CD8-positive, alpha-beta T cell (primary cell): ENCODE measurements at regions of chr19 and their contacts with region 1.

Region 1: DNA sequence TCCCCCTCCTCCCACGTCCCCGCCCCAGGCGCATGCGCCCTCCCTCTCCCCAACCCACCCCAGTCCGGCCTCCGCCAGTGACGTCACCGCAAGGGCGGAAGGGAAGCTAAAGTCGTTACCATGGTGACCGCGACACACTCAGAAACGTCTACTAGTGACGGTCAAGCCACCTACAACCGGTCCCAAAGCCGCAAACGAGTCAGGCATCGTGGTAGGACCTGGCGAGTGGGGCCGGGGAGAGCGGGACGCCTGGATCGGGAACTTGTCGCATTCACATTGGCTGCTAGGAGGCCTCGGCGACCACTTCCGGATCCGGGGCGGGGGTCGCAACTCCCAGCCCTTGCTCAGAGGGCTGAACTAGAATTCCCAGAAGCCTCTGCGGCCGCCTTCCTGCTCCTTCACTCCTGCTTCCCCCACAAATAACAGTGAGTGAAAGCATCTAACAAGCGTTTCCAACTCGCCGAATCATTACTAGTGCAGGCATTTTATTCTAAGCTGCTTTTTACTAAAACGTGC is at the start of gene ZSCAN5A:
- DNase-seq: peak; percentile 93 to 99 (median 98)
- ATAC-seq: peak; percentile 73
- H3K4me3 ChIP-seq: peak within 1 kb of the TSS; percentile 87 to 88
- H3K4me3 Mint-ChIP-seq: peak within 1 kb of the TSS; percentile 95
- H3K27ac ChIP-seq: peak within 1 kb of the TSS; percentile 96 to 100
- H3K27ac Mint-ChIP-seq: peak within 1 kb of the TSS; percentile 99
- H3K4me1 ChIP-seq: peaks cover 21% of the 10 kb centered on the region
- H3K4me1 Mint-ChIP-seq: peaks cover 26% of the 10 kb centered on the region
- H3K27me3 ChIP-seq: no peaks in the 10 kb centered on the region
- H3K27me3 Mint-ChIP-seq: no peaks in the 10 kb centered on the region
- CTCF ChIP-seq: no peak
- total RNA-seq, gene ZSCAN5A: 4.6 to 7.0 TPM

Region 2: DNA sequence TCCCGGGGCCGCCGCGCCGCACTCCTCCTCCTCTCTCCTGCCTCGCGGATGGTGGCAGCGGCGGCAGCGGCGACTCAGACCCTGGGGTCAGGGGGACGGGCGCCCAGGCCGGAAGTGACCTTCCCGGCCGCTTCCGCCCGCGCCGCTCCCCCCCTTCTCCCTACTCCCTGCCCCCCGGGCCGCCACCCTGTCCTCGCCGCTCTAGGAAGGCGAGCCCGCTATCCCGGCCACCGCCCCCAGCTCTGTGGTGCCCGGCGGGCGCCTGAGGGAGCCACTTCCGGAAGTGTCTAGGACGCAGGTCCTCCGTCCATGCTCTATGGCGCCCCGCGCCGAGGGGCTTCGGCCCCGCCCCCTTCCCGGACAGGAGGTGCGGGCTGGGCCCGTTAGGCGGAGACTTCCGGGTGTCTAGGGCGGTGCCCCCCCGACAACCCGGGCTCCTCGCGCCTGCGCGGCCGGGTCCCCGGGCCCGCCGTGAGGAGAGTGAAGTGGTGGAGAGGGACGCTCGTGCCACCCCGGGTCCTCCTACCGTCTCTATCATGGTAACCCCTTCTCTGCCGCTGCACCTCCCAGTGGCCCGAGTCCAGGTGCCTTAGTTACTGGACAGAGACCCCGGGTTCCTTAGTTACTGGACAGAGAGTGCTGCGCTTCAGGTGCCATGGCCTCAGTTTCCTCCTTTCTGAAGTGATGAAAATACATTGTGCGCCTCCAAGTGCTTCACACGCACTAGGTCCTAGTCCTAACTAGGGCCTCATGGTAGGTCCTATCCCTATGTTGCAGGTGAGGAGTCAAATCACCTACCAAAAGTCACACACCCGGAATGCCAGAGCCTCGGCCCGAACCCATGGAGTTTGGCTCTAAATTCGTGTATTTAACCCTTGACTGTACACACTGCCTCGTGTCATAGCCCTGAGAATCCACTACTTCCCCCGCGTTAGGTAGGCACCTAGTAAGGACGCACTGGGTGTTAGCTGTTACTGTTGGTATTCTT is 193.1 kb before region 1 on chr19 and contains the start of gene ZNF787:
- CTCF ChIA-PET with region 1: no interaction called
- POLR2A ChIA-PET with region 1: interaction called, 3 read pairs
- intact Hi-C with region 1: loop called (anchors 1 kb)
- DNase-seq: peak; percentile 94 to 99 (median 97)
- ATAC-seq: peak; percentile 82
- H3K4me3 ChIP-seq: peak within 1 kb of the TSS; percentile 56 to 67
- H3K4me3 Mint-ChIP-seq: peak within 1 kb of the TSS; percentile 88
- H3K27ac ChIP-seq: peak within 1 kb of the TSS; percentile 81 to 97
- H3K27ac Mint-ChIP-seq: peak within 1 kb of the TSS; percentile 94
- H3K4me1 ChIP-seq: peaks cover 24% of the 10 kb centered on the region
- H3K4me1 Mint-ChIP-seq: peaks cover 43% of the 10 kb centered on the region
- H3K27me3 ChIP-seq: no peaks in the 10 kb centered on the region
- H3K27me3 Mint-ChIP-seq: no peaks in the 10 kb centered on the region
- CTCF ChIP-seq: no peak
- total RNA-seq, gene ZNF787: 10.2 to 10.8 TPM

Region 3: GRCh38 chr19:56273563-56274117 is 41.0 kb before region 1 on chr19:
- CTCF ChIA-PET with region 1: no interaction called
- POLR2A ChIA-PET with region 1: no interaction called
- intact Hi-C with region 1: no loop called
- DNase-seq: no peak
- ATAC-seq: no peak
- H3K4me3 ChIP-seq: no peak overlapping the region
- H3K4me3 Mint-ChIP-seq: no peak overlapping the region
- H3K27ac ChIP-seq: no peak overlapping the region
- H3K27ac Mint-ChIP-seq: no peak overlapping the region
- H3K4me1 ChIP-seq: no peaks in the 10 kb centered on the region
- H3K4me1 Mint-ChIP-seq: no peaks in the 10 kb centered on the region
- H3K27me3 ChIP-seq: no peaks in the 10 kb centered on the region
- H3K27me3 Mint-ChIP-seq: no peaks in the 10 kb centered on the region
- CTCF ChIP-seq: no peak

Region 4: DNA sequence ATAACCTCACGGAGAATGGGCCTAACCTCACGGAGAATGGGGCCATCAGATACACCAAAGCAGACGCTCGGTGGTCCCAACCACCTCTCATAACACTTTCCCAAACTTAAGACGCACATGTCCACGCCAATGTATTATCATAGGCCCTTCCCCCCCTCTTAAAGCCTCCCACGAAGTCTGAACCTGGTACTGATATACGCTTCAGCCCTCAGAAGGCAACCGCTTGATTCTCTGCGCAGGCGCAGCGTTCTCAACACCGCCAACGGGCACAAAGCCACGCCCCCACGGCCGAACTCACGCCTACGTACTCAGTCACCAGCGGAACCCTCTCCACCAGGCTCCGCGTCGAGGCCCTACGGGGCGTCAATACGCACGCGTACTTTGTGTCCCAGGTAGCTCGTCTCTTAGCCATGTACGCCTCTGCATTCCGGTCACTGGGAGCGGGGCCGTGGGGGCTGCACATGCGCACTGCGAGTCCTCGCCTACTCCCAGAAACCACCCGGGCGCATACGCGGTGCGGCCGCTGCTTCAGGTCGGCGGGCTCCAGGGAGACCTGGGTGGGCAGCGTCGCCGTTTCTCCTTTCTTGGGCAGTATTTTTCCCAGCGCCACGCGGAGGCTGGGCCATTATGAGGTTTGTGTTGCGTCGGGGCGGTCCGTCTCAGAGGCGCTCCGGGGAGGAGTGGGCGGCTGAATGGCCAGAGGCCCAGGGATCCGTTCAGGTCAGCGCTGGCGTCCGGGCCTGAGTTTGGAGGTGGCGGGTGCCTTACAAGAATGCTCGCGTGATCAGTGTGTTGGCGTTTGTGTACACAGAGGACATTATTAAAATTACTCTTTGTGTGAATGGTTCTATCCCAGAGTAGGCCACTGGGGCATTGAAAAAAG is 53.5 kb after region 1 on chr19:
- CTCF ChIA-PET with region 1: no interaction called
- POLR2A ChIA-PET with region 1: interaction called, 3 read pairs
- intact Hi-C with region 1: loop called in 1 of 2 experiments (anchors 1 kb)
- DNase-seq: peak; percentile 52 to 90 (median 78)
- ATAC-seq: peak; percentile 96
- H3K4me3 ChIP-seq: peak overlapping the region; percentile 62 to 74
- H3K4me3 Mint-ChIP-seq: peak overlapping the region; percentile 95
- H3K27ac ChIP-seq: peak overlapping the region; percentile 44 to 75
- H3K27ac Mint-ChIP-seq: peak overlapping the region; percentile 92
- H3K4me1 ChIP-seq: peaks cover 10% of the 10 kb centered on the region
- H3K4me1 Mint-ChIP-seq: peaks cover 28% of the 10 kb centered on the region
- H3K27me3 ChIP-seq: no peaks in the 10 kb centered on the region
- H3K27me3 Mint-ChIP-seq: no peaks in the 10 kb centered on the region
- CTCF ChIP-seq: no peak

Region 5: DNA sequence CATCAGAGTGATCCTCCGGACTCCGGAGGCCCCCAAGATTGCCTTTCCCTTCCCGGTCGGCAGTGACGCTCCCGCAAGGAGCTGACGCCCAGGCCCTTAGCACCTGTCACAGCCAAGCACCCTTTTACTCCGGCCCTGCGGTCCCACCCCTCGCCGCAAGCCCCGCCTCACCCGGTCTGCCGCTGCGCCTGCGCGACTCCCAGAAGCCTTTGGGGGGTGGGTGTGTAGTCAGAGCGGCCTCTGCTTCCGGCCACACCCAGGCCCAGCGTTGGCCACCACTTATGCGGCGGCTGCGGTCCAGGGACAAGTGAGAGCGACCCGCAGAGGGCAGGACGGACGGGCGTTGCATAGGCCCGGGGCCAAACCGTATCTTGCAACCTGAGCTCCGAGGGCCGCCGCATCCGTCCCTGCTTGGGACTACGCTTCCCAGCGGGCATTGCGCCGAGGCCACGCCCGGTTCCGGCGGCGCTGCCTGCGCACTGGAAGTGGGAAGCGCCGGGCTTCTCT is 223.7 kb after region 1 on chr19:
- CTCF ChIA-PET with region 1: no interaction called
- POLR2A ChIA-PET with region 1: no interaction called
- intact Hi-C with region 1: loop called in 1 of 2 experiments (anchors 1 kb)
- DNase-seq: peak; percentile 73 to 92 (median 89)
- ATAC-seq: peak; percentile 90
- H3K4me3 ChIP-seq: peak overlapping the region; percentile 71 to 95
- H3K4me3 Mint-ChIP-seq: peak overlapping the region; percentile 92
- H3K27ac ChIP-seq: peak overlapping the region; percentile 72 to 87
- H3K27ac Mint-ChIP-seq: peak overlapping the region; percentile 95
- H3K4me1 ChIP-seq: peaks cover 12% of the 10 kb centered on the region
- H3K4me1 Mint-ChIP-seq: peaks cover 22% of the 10 kb centered on the region
- H3K27me3 ChIP-seq: no peaks in the 10 kb centered on the region
- H3K27me3 Mint-ChIP-seq: no peaks in the 10 kb centered on the region
- CTCF ChIP-seq: no peak

Region 6: GRCh38 chr19:57279418-57280066 is 964.9 kb after region 1 on chr19:
- CTCF ChIA-PET with region 1: no interaction called
- POLR2A ChIA-PET with region 1: no interaction called
- intact Hi-C with region 1: loop called in 1 of 2 experiments (anchors 2 kb)
- DNase-seq: peak; percentile 55 to 94 (median 75)
- ATAC-seq: peak; percentile 64
- H3K4me3 ChIP-seq: peak overlapping the region; percentile 54 to 99
- H3K4me3 Mint-ChIP-seq: no peak overlapping the region
- H3K27ac ChIP-seq: peak overlapping the region; percentile 86 to 93
- H3K27ac Mint-ChIP-seq: no peak overlapping the region
- H3K4me1 ChIP-seq: peaks cover 28% of the 10 kb centered on the region
- H3K4me1 Mint-ChIP-seq: peaks cover 33% of the 10 kb centered on the region
- H3K27me3 ChIP-seq: no peaks in the 10 kb centered on the region
- H3K27me3 Mint-ChIP-seq: no peaks in the 10 kb centered on the region
- CTCF ChIP-seq: no peak